OCI-LY7 (cell line): ENCODE measurements at regions of chr20 and their contacts with region 1.

Region 1: GRCh38 chr20:53915446-53916172 is 154.8 kb downstream of the BCAS1 start:
- DNase-seq: peak; percentile 94
- H3K4me3 ChIP-seq: peak overlapping the region; percentile 69
- H3K27ac ChIP-seq: peak overlapping the region; percentile 69
- H3K4me1 ChIP-seq: peaks cover 73% of the 10 kb centered on the region
- CTCF ChIP-seq: peak; percentile 97

Region 2: GRCh38 chr20:53287357-53288042 is 628.1 kb before region 1 on chr20:
- CTCF ChIA-PET with region 1: no interaction called
- POLR2A ChIA-PET with region 1: no interaction called
- intact Hi-C with region 1: no loop called
- DNase-seq: no peak
- H3K4me3 ChIP-seq: no peak overlapping the region
- H3K27ac ChIP-seq: no peak overlapping the region
- H3K4me1 ChIP-seq: no peaks in the 10 kb centered on the region
- CTCF ChIP-seq: no peak

Region 3: GRCh38 chr20:53594068-53595017 is 321.3 kb before region 1 on chr20:
- CTCF ChIA-PET with region 1: no interaction called
- POLR2A ChIA-PET with region 1: interaction called, 5 read pairs
- intact Hi-C with region 1: loop called (anchors 5 kb)
- DNase-seq: peak; percentile 96
- H3K4me3 ChIP-seq: peak overlapping the region; percentile 100
- H3K27ac ChIP-seq: peak overlapping the region; percentile 95
- H3K4me1 ChIP-seq: peaks cover 30% of the 10 kb centered on the region
- CTCF ChIP-seq: peak; percentile 59

Region 4: DNA sequence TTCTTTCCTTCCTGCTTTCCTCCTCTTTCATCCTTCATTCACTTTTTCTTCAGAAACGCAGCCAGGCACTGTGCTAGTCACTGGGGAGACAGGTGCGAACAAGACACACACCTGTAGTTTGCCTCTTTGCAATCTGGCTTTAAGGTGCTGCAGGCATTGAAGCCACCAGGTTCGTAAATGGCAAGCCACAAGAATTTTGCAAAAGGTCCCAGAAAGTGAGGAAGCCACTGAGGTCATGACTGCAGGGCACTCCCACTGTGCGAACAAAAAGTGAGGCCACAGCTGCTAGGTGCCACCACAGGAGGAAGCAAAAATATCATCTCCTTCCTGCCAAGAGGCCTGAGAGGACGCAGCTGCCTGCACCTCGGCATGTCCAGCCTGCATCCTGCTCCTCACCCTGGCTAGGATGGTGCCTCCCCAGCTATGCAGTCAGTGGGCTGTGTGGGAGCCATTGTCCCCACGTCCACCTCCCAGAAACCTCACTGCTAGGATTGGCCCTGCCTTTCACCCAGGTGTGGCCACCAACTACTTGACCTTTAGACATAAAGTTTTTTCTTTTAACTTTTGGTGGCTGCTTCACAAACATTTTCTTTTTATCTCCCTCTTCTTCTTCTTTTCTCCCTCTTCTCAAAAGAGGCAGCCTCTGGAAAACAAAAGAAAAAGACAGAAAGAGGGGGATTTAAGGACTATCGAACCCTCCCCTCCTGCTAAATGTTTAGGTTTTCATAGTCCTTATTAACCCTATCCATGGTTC is 76.0 kb before region 1 on chr20:
- CTCF ChIA-PET with region 1: no interaction called
- POLR2A ChIA-PET with region 1: interaction called, 3 read pairs
- intact Hi-C with region 1: loop called (anchors 2 kb)
- DNase-seq: peak; percentile 94
- H3K4me3 ChIP-seq: peak overlapping the region; percentile 43
- H3K27ac ChIP-seq: peak overlapping the region; percentile 76
- H3K4me1 ChIP-seq: peaks cover 91% of the 10 kb centered on the region
- CTCF ChIP-seq: no peak

Region 5: DNA sequence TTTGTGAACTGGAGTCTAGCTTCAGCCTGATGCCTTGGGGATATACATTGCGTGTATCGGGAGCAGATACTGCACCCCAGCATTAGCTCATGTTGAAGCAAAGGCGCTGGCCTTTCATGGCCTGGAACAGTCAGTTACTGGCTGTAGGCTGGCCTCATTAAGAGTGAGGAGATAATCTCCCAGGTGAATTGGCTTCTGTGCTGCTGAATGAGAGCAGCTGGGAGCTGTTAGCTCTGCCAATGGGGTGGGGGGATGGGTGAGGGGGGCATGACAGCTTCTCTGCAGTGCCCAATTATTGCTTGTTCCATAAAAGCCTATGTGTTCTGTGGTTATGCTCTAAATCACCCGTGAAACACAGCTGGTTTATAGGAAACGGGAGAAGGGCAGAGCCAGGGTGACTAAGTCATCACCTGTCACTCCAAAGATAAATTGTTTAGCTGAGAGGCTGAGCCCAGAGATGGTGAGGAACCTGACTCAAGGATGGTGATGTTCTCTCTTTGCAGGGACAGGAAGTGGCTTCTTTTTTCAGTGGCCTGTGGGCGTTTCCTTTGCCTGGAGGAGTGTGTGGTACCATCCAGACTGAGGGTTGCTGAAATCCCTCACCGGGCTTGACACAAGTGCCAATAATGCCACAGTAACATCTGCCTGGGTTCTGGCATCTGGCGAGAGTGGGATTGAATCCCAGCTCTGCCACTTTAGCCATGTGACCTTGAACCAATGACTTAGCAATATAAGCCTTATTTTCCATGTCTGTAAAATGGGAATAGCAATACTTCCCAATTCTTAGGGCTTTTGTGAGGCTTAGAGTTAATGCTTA is 16.1 kb before region 1 on chr20:
- CTCF ChIA-PET with region 1: interaction called, 13 read pairs
- POLR2A ChIA-PET with region 1: interaction called, 98 read pairs
- intact Hi-C with region 1: loop called (anchors 1 kb)
- DNase-seq: peak; percentile 93
- H3K4me3 ChIP-seq: peak overlapping the region; percentile 47
- H3K27ac ChIP-seq: peak overlapping the region; percentile 94
- H3K4me1 ChIP-seq: peaks cover 84% of the 10 kb centered on the region
- CTCF ChIP-seq: no peak

Region 6: GRCh38 chr20:53926428-53927028 is 10.9 kb after region 1 on chr20:
- CTCF ChIA-PET with region 1: interaction called, 3 read pairs
- POLR2A ChIA-PET with region 1: interaction called, 83 read pairs
- intact Hi-C with region 1: no loop called
- DNase-seq: peak; percentile 95
- H3K4me3 ChIP-seq: peak overlapping the region; percentile 59
- H3K27ac ChIP-seq: peak overlapping the region; percentile 99
- H3K4me1 ChIP-seq: peaks cover 95% of the 10 kb centered on the region
- CTCF ChIP-seq: no peak

Region 7: GRCh38 chr20:53939572-53940359 is 24.2 kb after region 1 on chr20:
- CTCF ChIA-PET with region 1: interaction called, 12 read pairs
- POLR2A ChIA-PET with region 1: interaction called, 83 read pairs
- intact Hi-C with region 1: loop called (anchors 1 kb)
- DNase-seq: peak; percentile 97
- H3K4me3 ChIP-seq: peak overlapping the region; percentile 62
- H3K27ac ChIP-seq: peak overlapping the region; percentile 71
- H3K4me1 ChIP-seq: peaks cover 79% of the 10 kb centered on the region
- CTCF ChIP-seq: peak; percentile 98